ENCODE measurements at regions of chr16 and their contacts with region 1.

Region 1: GRCh38 chr16:81737885-81738786 is 41.0 kb upstream of the PLCG2 start:
- DNase-seq: peak; percentile 80
- ATAC-seq: peak; percentile 83
- H3K4me3 ChIP-seq: peak overlapping the region; percentile 64
- H3K27ac ChIP-seq: peak overlapping the region; percentile 78
- H3K4me1 ChIP-seq: peaks cover 29% of the 10 kb centered on the region
- H3K27me3 ChIP-seq: no peaks in the 10 kb centered on the region
- CTCF ChIP-seq: peak; percentile 83 to 97 (median 88); a peak in 5 of 6 replicates
- EP300 ChIP-seq: no peak; a peak in 1 of 4 replicates
- POLR2A ChIP-seq: no peak
- RAD21 ChIP-seq: peak; percentile 88

Region 2: GRCh38 chr16:81006814-81007696 is 731.1 kb before region 1 on chr16 and contains the starts of genes CENPN and CMC2:
- CTCF ChIA-PET with region 1: interaction called, 3 read pairs
- POLR2A ChIA-PET with region 1: no interaction called
- RAD21 ChIA-PET with region 1: interaction called, 6 read pairs
- SMC1A ChIA-PET with region 1: interaction called, 4 read pairs
- in situ Hi-C with region 1: no loop called
- intact Hi-C with region 1: loop called (anchors 10 kb)
- DNase-seq: peak; percentile 95
- ATAC-seq: peak; percentile 87
- H3K4me3 ChIP-seq: peak within 1 kb of the TSS; percentile 93
- H3K27ac ChIP-seq: peak within 1 kb of the TSS; percentile 100
- H3K4me1 ChIP-seq: peaks cover 9% of the 10 kb centered on the region
- H3K27me3 ChIP-seq: no peaks in the 10 kb centered on the region
- CTCF ChIP-seq: 0 out of 6 replicates have a peak, but pooled peaks of 2 of the 3 experiments have one; percentile 1 to 7
- EP300 ChIP-seq: peak in 1 of 2 experiments; percentile 54; a peak in 2 of 4 replicates
- POLR2A ChIP-seq: peak; percentile 71
- RAD21 ChIP-seq: no peak
- polyA plus RNA-seq, gene CENPN: 134 to 143 TPM
- polyA plus RNA-seq, gene CMC2: 248 to 251 TPM

Region 3: GRCh38 chr16:81204798-81205680 is 533.1 kb before region 1 on chr16:
- CTCF ChIA-PET with region 1: interaction called, 16 read pairs
- POLR2A ChIA-PET with region 1: no interaction called
- RAD21 ChIA-PET with region 1: no interaction called
- SMC1A ChIA-PET with region 1: interaction called, 12 read pairs
- in situ Hi-C with region 1: loop called (anchors 5 kb)
- intact Hi-C with region 1: loop called (anchors 2 kb)
- DNase-seq: peak; percentile 11
- ATAC-seq: peak; percentile 75
- H3K4me3 ChIP-seq: no peak overlapping the region
- H3K27ac ChIP-seq: no peak overlapping the region
- H3K4me1 ChIP-seq: no peaks in the 10 kb centered on the region
- H3K27me3 ChIP-seq: peaks cover 0 to 1% of the 10 kb centered on the region in 2 experiments; a peak in 1 of 4 replicates
- CTCF ChIP-seq: peak; percentile 67 to 86 (median 73)
- EP300 ChIP-seq: no peak
- POLR2A ChIP-seq: no peak
- RAD21 ChIP-seq: peak; percentile 54

Region 4: GRCh38 chr16:81366316-81366932 is 371.7 kb before region 1 on chr16:
- CTCF ChIA-PET with region 1: interaction called, 30 read pairs
- POLR2A ChIA-PET with region 1: no interaction called
- RAD21 ChIA-PET with region 1: interaction called, 18 read pairs
- SMC1A ChIA-PET with region 1: interaction called, 24 read pairs
- in situ Hi-C with region 1: no loop called
- intact Hi-C with region 1: loop called (anchors 1 kb)
- DNase-seq: peak; percentile 23
- ATAC-seq: peak; percentile 82
- H3K4me3 ChIP-seq: no peak overlapping the region
- H3K27ac ChIP-seq: no peak overlapping the region
- H3K4me1 ChIP-seq: peaks cover 4% of the 10 kb centered on the region; the same call in 1 of the 2 replicates
- H3K27me3 ChIP-seq: no peaks in the 10 kb centered on the region
- CTCF ChIP-seq: peak; percentile 55 to 76 (median 70); a peak in 5 of 6 replicates
- EP300 ChIP-seq: no peak
- POLR2A ChIP-seq: no peak
- RAD21 ChIP-seq: peak; percentile 85

Region 5: GRCh38 chr16:81623363-81624102 is 114.6 kb before region 1 on chr16:
- CTCF ChIA-PET with region 1: interaction called, 4 read pairs
- POLR2A ChIA-PET with region 1: no interaction called
- RAD21 ChIA-PET with region 1: interaction called, 3 read pairs
- SMC1A ChIA-PET with region 1: interaction called, 9 read pairs
- in situ Hi-C with region 1: no loop called
- intact Hi-C with region 1: loop called (anchors 5 kb)
- DNase-seq: peak; percentile 37
- ATAC-seq: peak; percentile 76
- H3K4me3 ChIP-seq: no peak overlapping the region
- H3K27ac ChIP-seq: no peak overlapping the region
- H3K4me1 ChIP-seq: peaks cover 10% of the 10 kb centered on the region
- H3K27me3 ChIP-seq: no peaks in the 10 kb centered on the region
- CTCF ChIP-seq: peak; percentile 62 to 84 (median 68); a peak in 5 of 6 replicates
- EP300 ChIP-seq: no peak
- POLR2A ChIP-seq: no peak
- RAD21 ChIP-seq: peak; percentile 87

Region 6: DNA sequence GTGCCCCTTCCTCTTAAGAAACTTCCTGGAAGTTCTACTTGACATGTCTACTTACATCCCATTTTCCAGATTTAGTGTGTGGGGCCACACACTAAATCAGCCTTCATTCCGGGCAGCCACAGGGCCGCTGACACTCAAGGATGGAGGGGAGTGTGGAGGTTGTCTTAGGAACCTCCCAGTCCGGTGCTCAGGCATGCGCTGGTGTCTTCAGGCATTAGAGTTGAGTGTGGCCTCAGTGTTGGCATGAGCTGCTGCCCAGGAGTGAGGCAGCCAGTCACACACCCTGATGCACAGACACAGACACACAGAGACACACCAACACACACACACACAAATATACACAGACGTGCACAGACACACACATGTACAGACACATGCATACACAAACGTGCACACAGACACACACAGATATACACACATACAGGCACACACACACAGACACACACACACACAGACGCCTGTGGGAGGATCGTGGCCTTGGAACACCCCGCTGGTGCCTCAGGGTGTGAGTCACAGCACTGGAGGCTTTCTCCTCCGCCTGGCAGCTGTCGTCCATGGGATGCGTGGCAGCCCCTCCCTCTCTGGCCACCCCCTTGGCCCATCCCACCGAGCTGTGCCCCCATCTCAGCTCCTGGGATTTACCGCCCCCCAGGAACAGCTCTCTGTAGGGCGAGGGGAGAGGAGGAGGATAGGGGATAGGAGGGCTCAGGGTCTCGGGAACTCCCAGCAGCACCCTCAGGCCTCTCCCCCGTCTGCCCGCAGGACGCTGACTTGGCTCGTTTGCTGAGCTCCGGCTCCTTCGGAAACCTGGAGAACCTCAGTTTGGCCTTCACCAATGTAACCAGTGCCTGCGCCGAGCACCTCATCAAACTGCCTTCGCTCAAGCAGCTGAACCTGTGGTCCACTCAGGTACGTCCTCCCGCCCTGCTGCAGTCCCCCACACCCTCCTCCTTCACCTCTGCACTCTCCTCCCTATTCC is 34.7 kb before region 1 on chr16:
- CTCF ChIA-PET with region 1: no interaction called
- POLR2A ChIA-PET with region 1: no interaction called
- RAD21 ChIA-PET with region 1: no interaction called
- SMC1A ChIA-PET with region 1: no interaction called
- in situ Hi-C with region 1: no loop called
- intact Hi-C with region 1: no loop called
- DNase-seq: no peak
- ATAC-seq: no peak; the same call in 2 of the 3 replicates
- H3K4me3 ChIP-seq: no peak overlapping the region
- H3K27ac ChIP-seq: no peak overlapping the region
- H3K4me1 ChIP-seq: no peaks in the 10 kb centered on the region
- H3K27me3 ChIP-seq: no peaks in the 10 kb centered on the region
- CTCF ChIP-seq: no peak
- EP300 ChIP-seq: no peak
- POLR2A ChIP-seq: no peak
- RAD21 ChIP-seq: no peak

Region 7: GRCh38 chr16:81778861-81779535 is 40.9 kb after region 1 on chr16 and contains the start of gene PLCG2:
- CTCF ChIA-PET with region 1: interaction called, 7 read pairs
- POLR2A ChIA-PET with region 1: interaction called, 7 read pairs
- RAD21 ChIA-PET with region 1: interaction called, 16 read pairs
- SMC1A ChIA-PET with region 1: interaction called, 31 read pairs
- in situ Hi-C with region 1: no loop called
- intact Hi-C with region 1: no loop called
- DNase-seq: no peak
- ATAC-seq: peak; percentile 83
- H3K4me3 ChIP-seq: peak within 1 kb of the TSS; percentile 99
- H3K27ac ChIP-seq: peak within 1 kb of the TSS; percentile 86
- H3K4me1 ChIP-seq: peaks cover 28% of the 10 kb centered on the region
- H3K27me3 ChIP-seq: no peaks in the 10 kb centered on the region
- CTCF ChIP-seq: no peak
- EP300 ChIP-seq: no peak
- POLR2A ChIP-seq: peak; percentile 83
- RAD21 ChIP-seq: no peak
- polyA plus RNA-seq, gene PLCG2: 47.6 to 53.9 TPM

Region 8: GRCh38 chr16:81817789-81818567 is 79.8 kb after region 1 on chr16:
- CTCF ChIA-PET with region 1: interaction called, 17 read pairs
- POLR2A ChIA-PET with region 1: interaction called, 9 read pairs
- RAD21 ChIA-PET with region 1: interaction called, 21 read pairs
- SMC1A ChIA-PET with region 1: interaction called, 9 read pairs
- in situ Hi-C with region 1: no loop called
- intact Hi-C with region 1: no loop called
- DNase-seq: peak; percentile 79
- ATAC-seq: peak; percentile 68
- H3K4me3 ChIP-seq: peak overlapping the region; percentile 38; the same call in 1 of the 2 replicates
- H3K27ac ChIP-seq: peak overlapping the region; percentile 98
- H3K4me1 ChIP-seq: peaks cover 85% of the 10 kb centered on the region
- H3K27me3 ChIP-seq: no peaks in the 10 kb centered on the region
- CTCF ChIP-seq: no peak
- EP300 ChIP-seq: peak; percentile 18 to 79; a peak in 3 of 4 replicates
- POLR2A ChIP-seq: peak; percentile 58
- RAD21 ChIP-seq: no peak; the same call in 1 of the 2 replicates

Measured in GM12878 (cell line).